Activated naive CD4-positive, alpha-beta T cell treated with anti-CD3 and anti-CD28 coated beads for 36 hours (primary cell): ENCODE measurements at regions of chr15 and their contacts with region 1.

Region 1: GRCh38 chr15:63093486-63094205 is 28.0 kb upstream of the LACTB start:
- DNase-seq: peak; percentile 89
- H3K4me3 Mint-ChIP-seq: no peak overlapping the region
- H3K27ac Mint-ChIP-seq: no peak overlapping the region
- H3K4me1 Mint-ChIP-seq: no peaks in the 10 kb centered on the region
- H3K27me3 Mint-ChIP-seq: no peaks in the 10 kb centered on the region

Region 2: GRCh38 chr15:61541516-61541915 is 1552.1 kb before region 1 on chr15:
- CTCF ChIA-PET with region 1: no interaction called
- intact Hi-C with region 1: no loop called
- DNase-seq: no peak
- H3K4me3 Mint-ChIP-seq: no peak overlapping the region
- H3K27ac Mint-ChIP-seq: no peak overlapping the region
- H3K4me1 Mint-ChIP-seq: no peaks in the 10 kb centered on the region
- H3K27me3 Mint-ChIP-seq: peaks cover 8% of the 10 kb centered on the region

Region 3: GRCh38 chr15:62782039-62782791 is 311.4 kb before region 1 on chr15:
- CTCF ChIA-PET with region 1: no interaction called
- intact Hi-C with region 1: loop called (anchors 1 kb)
- DNase-seq: peak; percentile 25
- H3K4me3 Mint-ChIP-seq: no peak overlapping the region
- H3K27ac Mint-ChIP-seq: no peak overlapping the region
- H3K4me1 Mint-ChIP-seq: no peaks in the 10 kb centered on the region
- H3K27me3 Mint-ChIP-seq: no peaks in the 10 kb centered on the region

Region 4: DNA sequence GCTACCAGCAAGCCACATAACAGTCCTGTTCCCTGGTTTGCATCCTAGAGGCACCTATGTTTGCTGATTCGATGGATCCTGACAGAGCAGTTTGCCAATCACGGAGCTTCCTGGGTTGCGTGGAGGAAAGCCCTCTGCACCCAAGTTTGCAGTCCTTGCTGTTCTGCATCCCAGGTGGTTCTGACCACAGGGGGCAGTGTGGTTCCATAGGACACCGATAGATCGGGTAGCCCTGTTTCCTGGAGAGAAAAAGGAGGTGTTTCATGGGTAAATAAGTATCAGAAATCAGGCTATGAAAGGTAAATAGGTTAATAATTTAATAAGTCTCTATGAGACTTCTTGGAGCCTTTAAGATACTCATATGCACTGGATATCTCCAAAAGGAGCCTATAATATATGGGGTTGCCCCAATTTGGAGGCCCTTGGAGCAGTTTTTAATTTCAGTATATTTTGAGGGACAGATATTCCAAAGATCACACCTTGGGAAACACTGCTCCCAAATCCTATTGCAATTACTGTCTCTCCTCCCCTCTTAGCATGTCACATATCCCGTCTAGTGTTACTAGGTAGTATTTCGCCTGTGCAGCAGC is 245.7 kb before region 1 on chr15:
- CTCF ChIA-PET with region 1: interaction called, 6 read pairs
- intact Hi-C with region 1: loop called (anchors 1 kb)
- DNase-seq: peak; percentile 78
- H3K4me3 Mint-ChIP-seq: no peak overlapping the region
- H3K27ac Mint-ChIP-seq: no peak overlapping the region
- H3K4me1 Mint-ChIP-seq: no peaks in the 10 kb centered on the region
- H3K27me3 Mint-ChIP-seq: peaks cover 2% of the 10 kb centered on the region

Region 5: GRCh38 chr15:62995047-62995674 is 98.5 kb before region 1 on chr15:
- CTCF ChIA-PET with region 1: no interaction called
- intact Hi-C with region 1: no loop called
- DNase-seq: no peak
- H3K4me3 Mint-ChIP-seq: no peak overlapping the region
- H3K27ac Mint-ChIP-seq: no peak overlapping the region
- H3K4me1 Mint-ChIP-seq: no peaks in the 10 kb centered on the region
- H3K27me3 Mint-ChIP-seq: peaks cover 2% of the 10 kb centered on the region

Region 6: DNA sequence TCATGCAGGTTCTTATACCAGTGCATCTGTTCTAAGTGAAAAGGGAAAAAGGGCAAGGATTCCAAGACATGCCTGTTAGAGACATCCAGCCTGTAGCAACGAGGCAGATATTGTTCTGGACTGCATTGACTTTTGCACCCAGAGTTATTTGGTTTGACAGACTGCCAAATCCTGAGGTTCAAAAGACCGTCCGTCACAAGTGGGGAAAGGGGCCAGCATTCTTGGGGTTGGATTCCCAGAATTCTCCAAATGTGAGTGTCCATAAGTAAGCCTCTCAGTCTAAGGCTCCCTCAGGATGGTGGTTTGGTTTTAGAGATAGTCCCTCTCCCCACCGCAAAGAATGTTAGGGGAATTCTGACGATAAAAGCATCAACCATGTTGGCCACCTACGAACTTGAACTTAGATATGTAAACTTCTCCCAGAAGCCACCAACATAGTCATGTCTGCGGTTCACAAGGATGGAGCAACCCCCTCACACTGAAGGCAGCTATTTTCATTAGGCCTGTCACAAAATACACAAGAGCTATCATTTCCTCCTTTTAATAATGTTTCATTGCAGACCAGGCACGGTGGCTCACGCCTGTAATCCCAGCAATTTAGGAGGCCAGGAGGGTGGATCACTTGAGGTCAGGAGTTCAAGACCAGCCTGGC is 14.4 kb after region 1 on chr15:
- CTCF ChIA-PET with region 1: interaction called, 12 read pairs
- intact Hi-C with region 1: no loop called
- DNase-seq: no peak
- H3K4me3 Mint-ChIP-seq: no peak overlapping the region
- H3K27ac Mint-ChIP-seq: no peak overlapping the region
- H3K4me1 Mint-ChIP-seq: no peaks in the 10 kb centered on the region
- H3K27me3 Mint-ChIP-seq: peaks cover 11% of the 10 kb centered on the region

Region 7: GRCh38 chr15:63891079-63891767 is 797.6 kb after region 1 on chr15:
- CTCF ChIA-PET with region 1: no interaction called
- intact Hi-C with region 1: no loop called
- DNase-seq: peak; percentile 86
- H3K4me3 Mint-ChIP-seq: no peak overlapping the region
- H3K27ac Mint-ChIP-seq: no peak overlapping the region
- H3K4me1 Mint-ChIP-seq: peaks cover 40% of the 10 kb centered on the region
- H3K27me3 Mint-ChIP-seq: no peaks in the 10 kb centered on the region